ENCODE measurements at regions of chr5 and their contacts with region 1.

Region 1: GRCh38 chr5:32076699-32077695 is 97.1 kb downstream of the GOLPH3 start:
- DNase-seq: peak; percentile 74
- H3K4me3 ChIP-seq: no peak overlapping the region
- H3K27ac ChIP-seq: no peak overlapping the region
- H3K4me1 ChIP-seq: no peaks in the 10 kb centered on the region
- H3K27me3 ChIP-seq: no peaks in the 10 kb centered on the region
- CTCF ChIP-seq: peak; percentile 49 to 61
- POLR2A ChIP-seq: no peak

Region 2: DNA sequence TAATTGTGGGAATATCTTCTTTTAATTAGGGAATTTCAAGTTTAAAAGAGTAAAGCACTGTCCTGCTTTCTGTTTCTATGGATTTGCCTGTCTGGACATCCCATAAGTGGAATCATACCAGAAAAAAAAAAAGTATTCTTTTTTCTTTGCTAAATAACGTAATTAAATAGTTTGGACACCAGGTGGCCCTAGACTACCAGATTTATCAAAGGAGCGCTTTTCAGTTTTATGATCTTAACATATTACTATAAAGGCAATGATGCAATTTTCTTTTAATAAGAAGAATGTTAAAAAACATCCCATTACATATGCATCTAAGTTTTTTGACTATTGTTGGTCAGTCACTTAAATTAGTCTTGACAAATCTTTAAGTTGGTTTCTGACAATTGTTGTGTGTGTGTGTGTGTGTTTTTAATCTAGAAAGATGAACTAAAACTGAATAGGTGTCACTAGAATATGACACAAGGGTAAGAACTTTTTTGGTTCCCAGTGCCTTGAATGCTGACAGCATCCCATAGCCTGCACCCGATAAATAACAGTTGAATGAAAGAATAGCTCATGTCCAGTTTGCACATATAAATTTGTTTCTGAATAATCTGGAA is 495.4 kb before region 1 on chr5:
- CTCF ChIA-PET with region 1: interaction called, 9 read pairs
- POLR2A ChIA-PET with region 1: no interaction called
- dilution Hi-C with region 1: no loop called
- intact Hi-C with region 1: loop called (anchors 1 kb)
- DNase-seq: peak; percentile 32
- H3K4me3 ChIP-seq: no peak overlapping the region
- H3K27ac ChIP-seq: no peak overlapping the region
- H3K4me1 ChIP-seq: no peaks in the 10 kb centered on the region
- H3K27me3 ChIP-seq: peaks cover 0 to 2% of the 10 kb centered on the region in 2 experiments
- CTCF ChIP-seq: peak; percentile 8 to 14
- POLR2A ChIP-seq: no peak

Region 3: GRCh38 chr5:31819926-31820516 is 257.0 kb before region 1 on chr5:
- CTCF ChIA-PET with region 1: interaction called, 189 read pairs
- POLR2A ChIA-PET with region 1: no interaction called
- dilution Hi-C with region 1: no loop called
- intact Hi-C with region 1: loop called (anchors 1 kb)
- DNase-seq: no peak
- H3K4me3 ChIP-seq: no peak overlapping the region
- H3K27ac ChIP-seq: no peak overlapping the region
- H3K4me1 ChIP-seq: no peaks in the 10 kb centered on the region
- H3K27me3 ChIP-seq: no peaks in the 10 kb centered on the region
- CTCF ChIP-seq: no peak
- POLR2A ChIP-seq: no peak

Region 4: DNA sequence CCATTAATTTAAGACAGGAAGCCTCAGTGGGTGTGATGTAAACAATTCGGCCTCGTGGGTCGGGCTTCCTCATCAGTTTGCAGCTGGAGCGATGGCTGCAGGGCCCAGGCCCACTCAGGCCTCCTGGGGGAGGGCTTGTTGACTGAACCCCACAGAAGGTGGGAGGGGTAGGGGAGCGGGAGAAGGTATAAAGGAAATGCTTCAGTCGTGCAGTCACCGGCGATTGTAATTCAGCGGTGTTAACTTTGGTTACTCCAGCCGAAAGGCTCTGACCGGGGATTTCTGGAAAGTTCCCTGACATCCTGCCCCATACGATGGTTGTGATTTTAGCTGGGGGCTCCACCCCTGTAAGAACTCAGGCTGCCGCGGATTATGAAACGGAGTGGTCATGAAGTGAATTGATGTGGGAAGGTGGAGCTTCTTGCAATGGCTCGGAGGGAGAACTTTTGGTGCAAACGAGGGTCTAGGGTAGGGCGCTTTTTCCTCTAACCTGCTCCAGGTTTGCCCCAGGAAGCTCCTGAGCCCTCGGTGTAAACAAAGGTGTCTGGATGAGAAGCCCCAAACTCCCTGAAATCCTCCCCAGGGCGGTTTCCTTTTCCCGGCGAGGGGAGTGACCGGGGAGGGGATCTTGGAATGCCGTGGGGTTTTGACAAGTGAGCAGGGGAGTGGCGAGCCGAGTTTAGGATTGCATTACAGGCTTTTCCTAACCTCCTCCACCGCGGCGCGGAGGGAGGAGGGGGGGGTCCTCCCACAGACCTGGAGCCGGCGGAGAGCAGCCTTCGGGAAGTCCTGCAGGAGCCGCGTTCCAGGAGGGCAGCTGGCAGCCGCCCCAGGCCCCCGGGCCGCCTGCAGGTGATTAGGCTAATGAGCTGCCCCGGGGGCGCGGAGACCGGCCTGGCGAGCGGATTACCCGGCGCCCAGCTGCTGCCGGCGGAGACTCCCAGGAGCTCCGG is 222.5 kb before region 1 on chr5:
- CTCF ChIA-PET with region 1: interaction called, 13 read pairs
- POLR2A ChIA-PET with region 1: no interaction called
- dilution Hi-C with region 1: no loop called
- intact Hi-C with region 1: loop called (anchors 1 kb)
- DNase-seq: peak; percentile 40
- H3K4me3 ChIP-seq: peak overlapping the region; percentile 10 to 68 (median 36)
- H3K27ac ChIP-seq: peak overlapping the region; percentile 4
- H3K4me1 ChIP-seq: peaks cover 17% of the 10 kb centered on the region
- H3K27me3 ChIP-seq: peaks cover 0 to 2% of the 10 kb centered on the region in 2 experiments
- CTCF ChIP-seq: peak in 1 of 2 donors; percentile 5
- POLR2A ChIP-seq: no peak

Region 5: DNA sequence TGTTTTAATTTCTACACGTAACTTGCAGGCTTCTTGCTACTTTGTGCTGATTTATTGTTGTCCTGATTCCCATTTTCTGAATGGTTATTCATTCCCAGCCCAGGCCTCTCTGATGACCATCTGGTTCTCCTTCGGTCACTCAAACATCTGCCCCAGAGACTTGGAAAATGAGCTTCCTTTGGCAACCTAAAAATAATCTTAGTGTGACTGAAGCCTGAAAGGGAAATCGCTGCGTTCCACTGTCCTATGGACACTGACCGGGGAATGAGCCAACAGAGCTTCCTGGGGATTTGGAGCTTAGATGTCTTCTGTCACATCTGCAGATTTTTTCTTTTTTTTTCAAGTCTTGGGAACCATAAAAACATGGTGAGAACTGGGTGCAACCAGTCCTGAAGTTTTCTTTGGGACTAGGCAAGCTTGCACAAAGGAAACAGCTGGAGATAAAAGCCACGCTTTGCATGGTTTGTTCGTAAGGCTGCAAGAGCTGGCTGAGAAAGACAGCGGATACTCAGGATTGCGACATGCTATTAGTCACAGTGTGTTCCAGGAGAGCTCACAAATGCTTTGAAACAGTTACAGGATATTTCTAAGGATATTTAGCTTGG is 49.2 kb before region 1 on chr5:
- CTCF ChIA-PET with region 1: interaction called, 12 read pairs
- POLR2A ChIA-PET with region 1: interaction called, 6 read pairs
- dilution Hi-C with region 1: no loop called
- intact Hi-C with region 1: no loop called
- DNase-seq: peak; percentile 35
- H3K4me3 ChIP-seq: peak overlapping the region in 1 of 3 experiments; percentile 19
- H3K27ac ChIP-seq: peak overlapping the region; percentile 34
- H3K4me1 ChIP-seq: peaks cover 38% of the 10 kb centered on the region
- H3K27me3 ChIP-seq: no peaks in the 10 kb centered on the region
- CTCF ChIP-seq: no peak
- POLR2A ChIP-seq: no peak

Region 6: GRCh38 chr5:32092938-32093812 is 16.2 kb after region 1 on chr5:
- CTCF ChIA-PET with region 1: interaction called, 37 read pairs
- POLR2A ChIA-PET with region 1: no interaction called
- dilution Hi-C with region 1: no loop called
- intact Hi-C with region 1: no loop called
- DNase-seq: peak; percentile 77
- H3K4me3 ChIP-seq: no peak overlapping the region
- H3K27ac ChIP-seq: no peak overlapping the region
- H3K4me1 ChIP-seq: peaks cover 11% of the 10 kb centered on the region
- H3K27me3 ChIP-seq: no peaks in the 10 kb centered on the region
- CTCF ChIP-seq: peak; percentile 69 to 76
- POLR2A ChIP-seq: no peak

Region 7: GRCh38 chr5:32126691-32127090 is 49.7 kb after region 1 on chr5:
- CTCF ChIA-PET with region 1: no interaction called
- POLR2A ChIA-PET with region 1: no interaction called
- dilution Hi-C with region 1: no loop called
- intact Hi-C with region 1: no loop called
- DNase-seq: no peak
- H3K4me3 ChIP-seq: no peak overlapping the region
- H3K27ac ChIP-seq: no peak overlapping the region
- H3K4me1 ChIP-seq: no peaks in the 10 kb centered on the region
- H3K27me3 ChIP-seq: no peaks in the 10 kb centered on the region
- CTCF ChIP-seq: no peak
- POLR2A ChIP-seq: no peak

Measured in endothelial cell of umbilical vein (primary cell).